Naive thymus-derived CD4-positive, alpha-beta T cell (primary cell): ENCODE measurements at regions of chr7 and their contacts with region 1.

Region 1: DNA sequence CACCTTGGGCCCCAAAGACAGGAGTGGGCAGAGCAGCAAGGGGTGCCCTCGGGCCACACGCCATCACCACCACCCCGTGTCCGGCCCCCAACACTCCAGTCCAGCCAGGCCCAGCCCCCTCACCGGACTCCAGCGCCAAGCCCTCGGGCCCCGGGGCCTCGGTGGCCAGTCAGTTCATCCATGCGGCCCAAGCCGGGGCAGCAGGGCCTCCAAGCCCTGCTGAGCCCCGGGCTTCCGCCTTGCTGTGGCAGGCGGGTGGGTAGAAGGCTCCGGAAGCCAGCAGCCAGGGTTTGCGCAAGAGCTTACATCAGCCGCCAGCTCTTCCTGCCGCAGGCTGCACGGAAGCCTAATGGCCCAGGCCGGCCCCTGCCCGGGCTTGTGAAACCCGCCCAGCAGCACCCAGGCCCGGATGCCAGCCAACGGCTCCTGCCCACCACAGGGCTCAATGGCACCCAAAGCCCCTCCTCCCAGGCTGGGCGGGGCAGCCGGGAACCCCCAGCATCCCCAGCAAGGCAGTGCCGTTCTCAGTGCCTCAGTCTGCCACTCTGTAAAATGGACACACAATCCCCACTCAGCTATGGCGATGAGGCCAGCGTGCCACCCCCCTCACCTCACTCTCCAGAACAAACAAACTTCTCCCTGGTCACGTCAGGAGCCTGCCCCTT is 26.5 kb downstream of the TNRC18 start:
- DNase-seq: peak; percentile 75 to 92 (median 88)
- ATAC-seq: peak; percentile 96
- H3K4me3 ChIP-seq: peak overlapping the region; percentile 99
- H3K4me3 Mint-ChIP-seq: peak overlapping the region; percentile 78 to 89 (median 83)
- H3K27ac ChIP-seq: peak overlapping the region; percentile 93
- H3K27ac Mint-ChIP-seq: peak overlapping the region; percentile 84 to 95 (median 91)
- H3K4me1 ChIP-seq: peaks cover 20 to 21% of the 10 kb centered on the region in 2 donors
- H3K4me1 Mint-ChIP-seq: peaks cover 27 to 46% (median 37%) of the 10 kb centered on the region in 7 donors
- H3K27me3 ChIP-seq: no peaks in the 10 kb centered on the region
- H3K27me3 Mint-ChIP-seq: no peaks in the 10 kb centered on the region

Region 2: GRCh38 chr7:4973728-4974198 is 423.4 kb before region 1 on chr7:
- CTCF ChIA-PET with region 1: no interaction called
- POLR2A ChIA-PET with region 1: no interaction called
- intact Hi-C with region 1: loop called in 1 of 2 experiments (anchors 2 kb)
- DNase-seq: peak; percentile 89 to 99 (median 95)
- ATAC-seq: peak; percentile 99
- H3K4me3 ChIP-seq: peak overlapping the region; percentile 68
- H3K4me3 Mint-ChIP-seq: peak overlapping the region; percentile 85 to 100 (median 98)
- H3K27ac ChIP-seq: peak overlapping the region; percentile 78
- H3K27ac Mint-ChIP-seq: peak overlapping the region; percentile 90 to 99 (median 95)
- H3K4me1 ChIP-seq: peaks cover 4 to 9% of the 10 kb centered on the region in 2 donors
- H3K4me1 Mint-ChIP-seq: peaks cover 22 to 44% (median 33%) of the 10 kb centered on the region in 7 donors
- H3K27me3 ChIP-seq: no peaks in the 10 kb centered on the region
- H3K27me3 Mint-ChIP-seq: peaks cover 0 to 2% (median 0%) of the 10 kb centered on the region in 5 donors

Region 3: DNA sequence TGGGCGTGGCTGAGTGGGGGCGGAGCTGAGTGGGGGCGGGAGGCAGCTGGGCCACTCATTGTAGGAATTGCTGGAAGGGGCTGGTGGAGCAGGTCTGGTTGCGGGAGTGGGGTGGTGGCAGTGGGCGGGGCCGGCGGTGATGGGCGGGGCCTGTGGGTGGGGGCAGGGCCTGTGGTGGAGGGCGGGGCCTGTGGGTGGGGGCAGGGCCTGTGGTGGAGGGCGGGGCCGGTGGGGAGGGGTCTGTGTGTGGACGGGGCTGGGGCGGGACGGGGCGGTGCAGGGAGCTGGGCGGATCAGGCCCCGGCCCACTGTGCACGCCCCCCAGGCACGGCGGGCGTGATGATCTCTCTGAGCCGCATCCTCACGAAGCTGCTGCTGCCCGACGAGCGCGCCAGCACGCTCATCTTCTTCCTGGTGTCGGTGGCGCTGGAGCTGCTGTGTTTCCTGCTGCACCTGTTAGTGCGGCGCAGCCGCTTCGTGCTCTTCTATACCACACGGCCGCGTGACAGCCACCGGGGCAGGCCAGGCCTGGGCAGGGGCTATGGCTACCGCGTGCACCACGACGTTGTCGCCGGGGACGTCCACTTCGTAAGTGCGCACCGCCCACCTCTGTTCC is 100.4 kb before region 1 on chr7:
- CTCF ChIA-PET with region 1: no interaction called
- POLR2A ChIA-PET with region 1: no interaction called
- intact Hi-C with region 1: loop called (anchors 1 to 2 kb)
- DNase-seq: peak; percentile 49 to 83 (median 72)
- ATAC-seq: peak; percentile 95
- H3K4me3 ChIP-seq: peak overlapping the region; percentile 61
- H3K4me3 Mint-ChIP-seq: peak overlapping the region; percentile 82 to 92 (median 85)
- H3K27ac ChIP-seq: no peak overlapping the region
- H3K27ac Mint-ChIP-seq: peak overlapping the region in 8 of 9 donors; percentile 36 to 92 (median 74)
- H3K4me1 ChIP-seq: peaks cover 8 to 13% of the 10 kb centered on the region in 2 donors
- H3K4me1 Mint-ChIP-seq: peaks cover 9 to 17% (median 14%) of the 10 kb centered on the region in 7 donors
- H3K27me3 ChIP-seq: no peaks in the 10 kb centered on the region
- H3K27me3 Mint-ChIP-seq: peaks cover 0 to 28% (median 3%) of the 10 kb centered on the region in 5 donors

Region 4: GRCh38 chr7:5363729-5364128 is 33.4 kb before region 1 on chr7:
- CTCF ChIA-PET with region 1: interaction called, 4 read pairs
- POLR2A ChIA-PET with region 1: no interaction called
- intact Hi-C with region 1: loop called (anchors 1 kb)
- DNase-seq: no peak
- ATAC-seq: no peak
- H3K4me3 ChIP-seq: no peak overlapping the region
- H3K4me3 Mint-ChIP-seq: peak overlapping the region in 1 of 10 donors; percentile 8
- H3K27ac ChIP-seq: no peak overlapping the region
- H3K27ac Mint-ChIP-seq: peak overlapping the region in 2 of 9 donors; percentile 51 to 53
- H3K4me1 ChIP-seq: peaks cover 0 to 5% of the 10 kb centered on the region in 2 donors
- H3K4me1 Mint-ChIP-seq: peaks cover 5 to 20% (median 11%) of the 10 kb centered on the region in 7 donors
- H3K27me3 ChIP-seq: no peaks in the 10 kb centered on the region
- H3K27me3 Mint-ChIP-seq: no peaks in the 10 kb centered on the region

Region 5: GRCh38 chr7:5450549-5451372 is 53.6 kb after region 1 on chr7:
- CTCF ChIA-PET with region 1: interaction called, 8 read pairs
- POLR2A ChIA-PET with region 1: no interaction called
- intact Hi-C with region 1: loop called in 1 of 2 experiments (anchors 2 kb)
- DNase-seq: peak in 6 of 9 donors; percentile 22 to 45 (median 40)
- ATAC-seq: peak; percentile 80
- H3K4me3 ChIP-seq: no peak overlapping the region
- H3K4me3 Mint-ChIP-seq: no peak overlapping the region
- H3K27ac ChIP-seq: no peak overlapping the region
- H3K27ac Mint-ChIP-seq: no peak overlapping the region
- H3K4me1 ChIP-seq: no peaks in the 10 kb centered on the region
- H3K4me1 Mint-ChIP-seq: peaks cover 0 to 7% (median 0%) of the 10 kb centered on the region in 7 donors
- H3K27me3 ChIP-seq: no peaks in the 10 kb centered on the region
- H3K27me3 Mint-ChIP-seq: peaks cover 0 to 7% (median 5%) of the 10 kb centered on the region in 5 donors

Region 6: GRCh38 chr7:5694912-5695726 is 298.0 kb after region 1 on chr7:
- CTCF ChIA-PET with region 1: no interaction called
- POLR2A ChIA-PET with region 1: interaction called, 6 read pairs
- intact Hi-C with region 1: loop called (anchors 1 to 2 kb)
- DNase-seq: peak; percentile 38 to 91 (median 81)
- ATAC-seq: peak; percentile 75
- H3K4me3 ChIP-seq: peak overlapping the region; percentile 60
- H3K4me3 Mint-ChIP-seq: peak overlapping the region; percentile 88 to 99 (median 96)
- H3K27ac ChIP-seq: peak overlapping the region; percentile 86
- H3K27ac Mint-ChIP-seq: peak overlapping the region; percentile 89 to 99 (median 94)
- H3K4me1 ChIP-seq: peaks cover 45 to 88% of the 10 kb centered on the region in 2 donors
- H3K4me1 Mint-ChIP-seq: peaks cover 84 to 100% (median 93%) of the 10 kb centered on the region in 7 donors
- H3K27me3 ChIP-seq: no peaks in the 10 kb centered on the region
- H3K27me3 Mint-ChIP-seq: peaks cover 0 to 10% (median 0%) of the 10 kb centered on the region in 5 donors

Region 7: DNA sequence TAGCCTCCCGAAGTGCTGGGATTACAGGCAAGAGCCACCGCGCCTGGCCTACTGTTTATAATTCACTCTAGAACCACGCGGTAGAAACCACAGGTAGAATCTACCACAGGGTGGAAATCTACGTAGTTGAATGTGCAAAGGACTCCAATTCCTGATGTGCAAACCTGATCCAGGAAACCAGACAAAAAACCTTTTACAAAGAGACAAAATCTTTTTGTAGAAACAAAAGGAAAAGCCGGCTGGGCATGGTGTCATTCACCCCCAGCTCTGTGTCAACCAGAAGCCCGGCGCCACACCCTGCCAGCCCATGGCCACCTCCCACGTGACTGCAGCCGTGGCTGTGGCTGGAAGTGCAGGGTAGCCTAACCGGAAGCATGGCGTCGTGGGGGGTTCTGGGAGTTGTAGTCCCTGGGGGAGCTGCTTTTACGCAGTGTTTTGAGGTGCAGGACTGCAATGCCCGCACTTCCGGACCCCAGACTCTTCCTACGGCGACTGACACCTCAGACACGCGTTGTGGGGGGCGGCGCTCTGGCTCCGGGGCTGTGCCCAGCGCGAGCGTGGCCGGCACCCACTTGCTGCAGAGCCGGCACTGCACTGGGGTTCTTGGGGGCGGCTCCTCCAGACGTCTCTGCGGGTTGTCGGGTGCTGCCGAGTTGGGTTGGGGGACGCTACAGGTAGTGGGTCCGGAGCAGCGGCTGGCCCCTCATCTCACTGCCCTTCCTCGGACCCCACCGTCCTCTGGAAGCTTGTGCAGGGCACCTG is 425.8 kb after region 1 on chr7:
- CTCF ChIA-PET with region 1: no interaction called
- POLR2A ChIA-PET with region 1: no interaction called
- intact Hi-C with region 1: loop called (anchors 2 kb)
- DNase-seq: peak; percentile 88 to 99 (median 99)
- ATAC-seq: peak; percentile 95
- H3K4me3 ChIP-seq: peak overlapping the region; percentile 95
- H3K4me3 Mint-ChIP-seq: peak overlapping the region; percentile 74 to 94 (median 88)
- H3K27ac ChIP-seq: peak overlapping the region; percentile 86
- H3K27ac Mint-ChIP-seq: peak overlapping the region; percentile 82 to 97 (median 93)
- H3K4me1 ChIP-seq: peaks cover 15% of the 10 kb centered on the region in 2 donors
- H3K4me1 Mint-ChIP-seq: peaks cover 15 to 43% (median 23%) of the 10 kb centered on the region in 7 donors
- H3K27me3 ChIP-seq: no peaks in the 10 kb centered on the region
- H3K27me3 Mint-ChIP-seq: no peaks in the 10 kb centered on the region

Region 8: DNA sequence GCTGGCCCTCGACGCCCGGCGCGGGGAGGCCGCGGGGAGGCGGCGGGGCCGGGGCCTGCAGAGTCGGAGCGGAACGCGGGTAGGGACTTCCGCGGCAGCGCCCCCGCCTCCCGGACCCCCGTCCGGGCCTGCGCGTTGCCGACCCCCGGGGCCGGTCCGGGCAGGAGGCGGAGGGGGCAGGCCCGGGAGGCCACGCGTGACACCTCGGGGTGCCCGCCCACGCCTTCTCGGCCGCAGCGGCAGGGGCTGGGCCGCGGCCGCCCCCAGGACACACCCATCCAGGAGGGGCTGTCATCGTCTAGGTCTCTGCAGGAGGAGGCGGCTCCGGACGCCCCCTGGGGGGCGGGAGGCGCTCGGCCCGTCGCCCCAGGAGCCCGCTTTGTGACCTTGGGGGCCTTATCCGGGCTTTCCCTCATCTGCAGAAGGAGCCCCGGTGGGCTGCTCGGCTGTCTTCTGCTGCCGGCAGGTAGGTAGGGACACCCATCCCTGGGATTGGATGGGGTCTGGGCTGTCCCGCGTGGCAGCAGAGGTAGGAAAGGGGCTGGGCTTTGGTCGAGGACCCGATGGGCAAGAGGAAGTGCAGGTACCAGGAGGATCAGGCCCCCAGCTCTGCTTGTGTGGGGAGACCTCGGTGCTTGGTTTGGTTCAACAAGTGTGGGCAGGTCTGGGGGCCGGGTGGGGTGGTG is 1240.6 kb after region 1 on chr7:
- CTCF ChIA-PET with region 1: no interaction called
- POLR2A ChIA-PET with region 1: no interaction called
- intact Hi-C with region 1: no loop called
- DNase-seq: peak; percentile 23 to 72 (median 42)
- ATAC-seq: peak; percentile 73
- H3K4me3 ChIP-seq: peak overlapping the region; percentile 52
- H3K4me3 Mint-ChIP-seq: peak overlapping the region; percentile 81 to 90 (median 87)
- H3K27ac ChIP-seq: peak overlapping the region; percentile 76
- H3K27ac Mint-ChIP-seq: peak overlapping the region; percentile 76 to 95 (median 87)
- H3K4me1 ChIP-seq: peaks cover 10 to 14% of the 10 kb centered on the region in 2 donors
- H3K4me1 Mint-ChIP-seq: peaks cover 24 to 32% (median 27%) of the 10 kb centered on the region in 7 donors
- H3K27me3 ChIP-seq: no peaks in the 10 kb centered on the region
- H3K27me3 Mint-ChIP-seq: no peaks in the 10 kb centered on the region